ENCODE measurements at regions of chr10 and their contacts with region 1.

Region 1: DNA sequence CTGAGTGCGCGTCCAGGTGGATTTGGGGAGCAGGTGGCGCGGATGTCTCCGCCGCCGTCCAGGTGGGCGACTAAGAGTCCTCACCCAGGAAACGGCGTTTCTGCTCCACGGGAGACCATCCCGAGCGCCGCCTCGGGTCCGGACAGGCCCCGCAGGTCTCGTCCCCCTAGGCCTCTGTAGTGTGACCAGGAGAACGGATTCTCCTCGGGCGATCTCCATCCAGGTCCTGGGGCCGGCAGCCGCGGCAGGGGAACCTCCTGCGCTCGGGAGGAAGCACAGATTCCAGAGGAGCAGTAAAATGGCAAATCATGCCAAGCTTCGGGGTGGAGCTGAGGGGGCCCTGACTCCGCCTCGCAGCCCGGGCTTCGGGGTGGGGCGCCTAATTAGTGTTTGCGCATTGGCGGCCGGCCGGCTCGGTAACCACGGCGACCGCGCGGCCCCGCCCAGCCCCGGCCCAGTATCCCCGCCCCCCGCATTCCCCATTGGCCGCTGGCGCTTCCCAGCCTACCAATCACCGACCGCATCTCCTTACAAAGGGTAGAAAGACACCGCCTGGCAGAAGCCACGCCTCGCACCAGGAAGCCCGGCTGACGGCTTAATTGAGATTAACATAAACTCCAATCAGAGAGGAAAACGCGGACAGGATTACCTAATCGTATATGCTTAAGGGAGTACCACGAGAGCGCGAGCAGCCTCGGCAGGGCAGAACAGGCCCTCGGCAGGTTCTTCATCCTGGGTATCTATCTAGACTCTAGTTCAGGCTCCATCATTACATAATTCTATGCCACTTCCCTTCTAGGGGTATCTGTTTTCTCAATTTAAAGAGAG is 168.6 kb downstream of the ARHGAP12 start:
- DNase-seq: peak; percentile 95
- ATAC-seq: peak; percentile 88 to 92
- H3K4me3 ChIP-seq: peak overlapping the region; percentile 67 to 89 (median 83)
- H3K27ac ChIP-seq: peak overlapping the region; percentile 95 to 97 (median 96)
- H3K4me1 ChIP-seq: peaks cover 16 to 33% of the 10 kb centered on the region in 2 donors
- H3K27me3 ChIP-seq: no peaks in the 10 kb centered on the region
- CTCF ChIP-seq: no peak
- POLR2A ChIP-seq: peak; percentile 88 to 93

Region 2: DNA sequence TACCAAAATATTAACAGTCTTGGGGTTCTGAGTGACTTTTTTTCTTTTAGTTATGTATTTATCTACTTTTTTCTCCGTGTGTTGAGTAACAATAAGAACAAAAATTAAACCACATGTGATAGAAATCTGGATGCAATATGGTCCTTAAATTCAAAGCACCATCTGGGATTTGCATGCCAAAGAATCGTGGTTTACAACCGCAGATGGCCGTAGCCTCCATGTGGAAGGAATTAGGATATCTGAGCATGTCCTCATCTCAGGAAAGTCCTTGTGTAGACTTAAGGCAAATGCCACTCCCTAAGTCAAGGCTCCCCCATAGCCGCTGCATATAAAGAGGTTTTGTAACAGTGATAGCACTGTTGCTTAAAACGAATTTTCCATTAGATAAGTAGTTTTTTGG is 137.0 kb before region 1 on chr10:
- in situ Hi-C with region 1: no loop called
- intact Hi-C with region 1: no loop called
- DNase-seq: no peak
- ATAC-seq: peak; percentile 34 to 60
- H3K4me3 ChIP-seq: no peak overlapping the region
- H3K27ac ChIP-seq: peak overlapping the region; percentile 28 to 58 (median 42)
- H3K4me1 ChIP-seq: peaks cover 30 to 35% of the 10 kb centered on the region in 2 donors
- H3K27me3 ChIP-seq: no peaks in the 10 kb centered on the region
- CTCF ChIP-seq: peak in 2 of 5 experiments; percentile 15 to 22
- POLR2A ChIP-seq: no peak

Region 3: GRCh38 chr10:31770307-31770902 is 10.4 kb after region 1 on chr10:
- in situ Hi-C with region 1: no loop called
- intact Hi-C with region 1: loop called (anchors 2 kb)
- DNase-seq: no peak
- ATAC-seq: no peak
- H3K4me3 ChIP-seq: no peak overlapping the region
- H3K27ac ChIP-seq: peak overlapping the region in 2 of 4 donors; percentile 92 to 95
- H3K4me1 ChIP-seq: peaks cover 13 to 36% of the 10 kb centered on the region in 2 donors
- H3K27me3 ChIP-seq: no peaks in the 10 kb centered on the region
- CTCF ChIP-seq: peak; percentile 59 to 72 (median 65)
- POLR2A ChIP-seq: no peak

Region 4: DNA sequence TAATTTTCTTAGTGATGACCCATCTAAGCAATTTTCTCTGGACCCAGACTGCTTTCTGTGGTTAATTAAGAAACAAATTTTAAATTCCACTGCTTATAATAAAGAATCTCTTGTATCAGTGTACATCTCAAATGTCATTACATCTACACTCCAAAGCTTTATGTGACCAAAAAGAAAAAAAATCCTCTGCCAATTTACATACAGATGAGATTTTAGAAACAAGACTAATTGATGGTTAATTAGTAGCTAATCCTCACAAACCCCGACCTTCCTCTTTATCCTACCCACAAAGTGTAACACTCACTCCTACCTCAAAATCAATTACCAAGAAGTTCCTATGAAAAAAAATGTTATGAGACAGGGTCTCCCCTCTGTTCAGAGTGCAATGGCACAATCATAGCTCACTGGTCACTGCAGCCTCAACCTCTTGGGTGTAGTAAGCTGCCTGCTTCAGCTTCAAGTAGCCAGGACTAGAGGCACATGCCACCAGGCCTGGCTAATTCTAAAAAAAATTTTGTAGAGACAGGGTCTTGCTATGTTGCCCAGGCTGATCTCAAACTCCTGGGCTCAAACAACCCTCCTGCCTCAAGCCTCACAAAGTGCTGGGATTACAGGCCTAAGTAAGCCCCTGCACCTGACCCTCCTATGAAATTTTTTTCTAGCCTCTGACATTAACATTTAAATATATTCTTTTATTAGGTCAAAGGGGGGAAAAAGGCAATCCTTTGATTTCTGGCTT is 281.4 kb after region 1 on chr10:
- in situ Hi-C with region 1: no loop called
- intact Hi-C with region 1: no loop called
- DNase-seq: no peak
- ATAC-seq: no peak
- H3K4me3 ChIP-seq: no peak overlapping the region
- H3K27ac ChIP-seq: no peak overlapping the region
- H3K4me1 ChIP-seq: peaks cover 37 to 45% of the 10 kb centered on the region in 2 donors
- H3K27me3 ChIP-seq: no peaks in the 10 kb centered on the region
- CTCF ChIP-seq: no peak
- POLR2A ChIP-seq: no peak